Breast epithelium (tissue), 4 donors: ENCODE measurements at regions of chr2 and their contacts with region 1.

Region 1: DNA sequence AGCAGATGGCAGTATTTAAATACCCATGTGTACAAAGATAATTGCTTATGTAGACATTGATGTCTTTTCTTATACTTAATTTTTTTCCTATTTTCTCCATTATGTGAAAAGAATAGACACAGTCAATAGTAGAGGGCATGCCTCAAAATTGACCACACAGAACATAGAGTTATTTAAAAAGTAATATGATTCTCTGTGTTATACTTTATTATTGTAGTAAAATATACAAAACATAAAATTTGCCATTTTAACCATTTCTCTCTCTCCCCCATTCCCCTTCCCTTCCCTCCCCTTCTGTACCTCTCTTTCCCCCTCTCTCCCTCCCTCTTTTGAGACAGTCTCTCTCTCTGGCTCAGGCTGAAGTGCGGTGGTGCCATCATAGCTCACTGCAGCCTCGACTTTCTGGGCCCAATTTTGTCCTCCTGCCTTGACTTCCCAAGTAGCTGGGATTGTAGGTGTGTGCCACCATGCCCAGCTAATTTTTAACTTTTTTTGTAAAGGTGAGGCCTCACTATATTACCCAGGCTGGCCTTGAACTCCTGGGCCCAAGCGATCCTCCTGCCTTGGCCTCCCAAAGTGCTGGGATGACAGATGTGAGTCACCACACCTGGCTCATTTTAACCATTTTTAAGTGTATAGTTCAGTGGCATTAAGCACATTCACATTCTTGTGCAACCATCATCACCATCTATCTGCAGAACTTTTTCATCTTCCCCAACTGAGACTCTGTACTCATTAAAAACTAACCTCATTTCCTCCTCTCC is 179.7 kb downstream of the MCFD2 start:
- DNase-seq: no peak
- H3K4me3 ChIP-seq: no peak overlapping the region
- H3K27ac ChIP-seq: no peak overlapping the region
- H3K4me1 ChIP-seq: peaks cover 0 to 4% of the 10 kb centered on the region in 2 donors
- H3K27me3 ChIP-seq: no peaks in the 10 kb centered on the region
- CTCF ChIP-seq: no peak
- POLR2A ChIP-seq: no peak

Region 2: GRCh38 chr2:46749042-46749531 is 13.2 kb after region 1 on chr2:
- intact Hi-C with region 1: loop called (anchors 1 kb)
- DNase-seq: no peak
- H3K4me3 ChIP-seq: no peak overlapping the region
- H3K27ac ChIP-seq: peak overlapping the region in 1 of 2 donors; percentile 15
- H3K4me1 ChIP-seq: no peaks in the 10 kb centered on the region
- H3K27me3 ChIP-seq: no peaks in the 10 kb centered on the region
- CTCF ChIP-seq: no peak
- POLR2A ChIP-seq: no peak

Region 3: DNA sequence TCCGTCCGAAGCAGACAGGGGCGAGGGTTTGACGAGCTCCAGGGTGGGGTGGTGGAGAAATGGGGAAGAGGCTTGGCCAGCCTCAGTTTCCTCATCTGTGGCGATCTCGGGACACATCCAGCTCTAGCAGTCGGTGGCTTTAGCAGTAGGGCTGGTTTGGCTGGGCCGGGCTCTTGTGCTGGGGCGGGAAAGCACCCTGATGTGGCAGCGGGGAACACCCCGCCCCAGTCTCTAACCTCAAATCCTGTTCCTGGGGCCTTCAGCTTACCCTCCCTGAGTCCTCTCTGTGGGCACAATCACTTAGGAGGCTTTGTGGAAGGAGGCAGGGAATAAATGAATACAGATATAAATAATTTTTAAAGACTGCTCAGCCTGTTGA is 206.2 kb after region 1 on chr2:
- intact Hi-C with region 1: no loop called
- DNase-seq: peak in 1 of 2 donors; percentile 56
- H3K4me3 ChIP-seq: peak overlapping the region; percentile 83 to 95 (median 86)
- H3K27ac ChIP-seq: peak overlapping the region; percentile 97 to 98
- H3K4me1 ChIP-seq: peaks cover 0 to 8% of the 10 kb centered on the region in 2 donors
- H3K27me3 ChIP-seq: no peaks in the 10 kb centered on the region
- CTCF ChIP-seq: no peak
- POLR2A ChIP-seq: no peak